Activated B cell treated with CpG ODN at 0.5 μM for 24 hours (primary cell): ENCODE measurements at regions of chr1 and their contacts with region 1.

Region 1: DNA sequence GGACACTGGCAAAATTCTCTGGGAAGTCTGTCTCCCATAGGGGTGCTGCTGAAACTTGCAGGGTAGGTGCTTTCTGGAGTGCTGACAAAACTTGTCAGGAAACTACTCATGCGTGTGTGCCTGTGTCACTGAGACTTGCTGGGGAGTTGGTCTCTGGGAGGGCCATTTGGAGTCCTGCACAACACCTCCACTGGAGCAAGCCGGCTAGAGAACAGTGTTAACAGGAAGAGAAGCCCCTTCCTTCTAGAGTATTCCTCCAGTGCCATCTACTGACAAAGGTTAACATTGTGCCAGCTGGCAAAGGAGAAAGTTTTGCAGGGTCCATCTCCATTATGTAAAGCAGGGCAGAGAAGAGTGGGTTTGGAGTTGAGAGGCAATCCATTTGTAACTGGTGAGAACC is 30.0 kb downstream of the ZMYM4 start:
- DNase-seq: no peak
- ATAC-seq: peak; percentile 81
- H3K4me3 Mint-ChIP-seq: no peak overlapping the region
- H3K27ac Mint-ChIP-seq: no peak overlapping the region
- H3K4me1 Mint-ChIP-seq: peaks cover 7% of the 10 kb centered on the region
- H3K27me3 Mint-ChIP-seq: no peaks in the 10 kb centered on the region
- CTCF ChIP-seq: no peak

Region 2: DNA sequence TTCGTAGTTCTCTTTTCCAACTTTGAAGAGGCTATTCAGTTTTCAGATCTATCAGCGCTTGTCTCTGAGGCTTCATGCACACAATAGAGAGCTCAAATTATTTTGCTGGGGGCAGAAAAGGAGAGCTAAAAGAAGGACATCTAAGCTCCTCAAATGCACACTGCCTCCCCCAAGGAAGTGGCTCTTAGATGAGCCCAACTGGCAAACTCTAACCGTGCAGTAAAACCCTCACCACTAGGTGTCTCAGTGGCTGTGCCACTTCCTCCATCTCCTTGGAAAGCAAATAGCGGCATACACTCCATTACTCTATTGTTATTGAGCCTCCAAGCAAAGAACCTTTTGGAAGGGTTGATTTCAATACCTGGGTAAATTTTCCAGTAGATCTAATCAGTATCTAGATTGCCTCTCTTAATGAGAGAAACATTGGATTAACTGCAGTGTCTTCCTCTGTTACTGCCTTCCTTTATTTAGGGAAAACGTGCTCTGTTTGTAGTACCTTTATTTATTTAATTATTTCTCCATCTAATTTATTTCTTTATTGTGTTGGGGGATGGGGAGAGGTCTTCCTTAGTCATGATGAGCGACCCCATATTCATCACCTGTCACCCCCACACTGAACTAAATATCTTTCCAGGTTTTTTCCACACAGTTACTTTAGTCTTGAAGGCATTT is 96.3 kb before region 1 on chr1:
- CTCF ChIA-PET with region 1: interaction called, 17 read pairs
- POLR2A ChIA-PET with region 1: interaction called, 7 read pairs
- intact Hi-C with region 1: loop called (anchors 1 kb)
- DNase-seq: peak; percentile 30
- ATAC-seq: peak; percentile 100
- H3K4me3 Mint-ChIP-seq: no peak overlapping the region
- H3K27ac Mint-ChIP-seq: no peak overlapping the region
- H3K4me1 Mint-ChIP-seq: peaks cover 5% of the 10 kb centered on the region
- H3K27me3 Mint-ChIP-seq: no peaks in the 10 kb centered on the region
- CTCF ChIP-seq: peak; percentile 58

Region 3: GRCh38 chr1:35278886-35279554 is 19.4 kb before region 1 on chr1:
- CTCF ChIA-PET with region 1: no interaction called
- POLR2A ChIA-PET with region 1: no interaction called
- intact Hi-C with region 1: no loop called
- DNase-seq: no peak
- ATAC-seq: no peak
- H3K4me3 Mint-ChIP-seq: no peak overlapping the region
- H3K27ac Mint-ChIP-seq: no peak overlapping the region
- H3K4me1 Mint-ChIP-seq: peaks cover 3% of the 10 kb centered on the region
- H3K27me3 Mint-ChIP-seq: no peaks in the 10 kb centered on the region
- CTCF ChIP-seq: no peak